ENCODE measurements at regions of chr7 and their contacts with region 1.

Region 1: DNA sequence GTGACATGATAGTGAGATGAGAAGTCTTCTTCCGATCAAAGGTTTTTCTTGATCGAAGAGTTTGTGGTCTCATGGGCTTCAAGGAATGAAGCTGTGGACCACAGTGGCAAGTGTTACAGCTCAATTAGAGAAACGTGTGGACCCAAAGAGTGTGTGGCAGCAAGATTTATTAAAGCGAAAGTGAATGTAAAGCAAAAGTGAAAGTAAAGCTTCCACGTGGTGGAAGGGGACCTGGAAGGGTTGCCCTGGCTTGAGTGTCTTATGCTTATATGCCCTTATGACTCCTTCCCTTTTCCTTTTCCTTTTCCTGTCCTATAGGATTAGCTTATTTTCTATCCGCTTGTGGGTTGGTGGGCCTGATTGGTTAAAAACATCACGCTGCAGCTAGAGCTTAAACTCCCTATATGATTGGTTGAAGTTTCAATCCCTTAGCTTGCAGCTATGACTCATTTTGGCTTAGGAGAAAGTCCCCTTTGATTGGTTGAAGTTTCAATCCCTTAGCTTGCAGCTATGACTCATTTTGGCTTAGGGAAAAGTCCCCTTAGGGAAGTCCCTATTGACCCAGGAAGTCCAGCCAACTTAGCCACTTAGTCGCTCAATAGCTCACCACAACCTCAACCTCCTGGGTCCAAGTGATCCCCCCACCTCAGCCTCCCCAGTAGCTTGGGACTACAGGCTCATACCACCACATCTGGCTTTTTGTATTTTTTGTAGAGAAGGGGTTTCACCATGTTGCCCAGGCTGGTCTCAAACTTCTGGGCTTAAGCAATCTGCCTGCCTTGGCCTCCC is 34.7 kb downstream of the MRPS24 start:
- DNase-seq: peak; percentile 24
- H3K4me3 Mint-ChIP-seq: peak overlapping the region; percentile 73
- H3K27ac Mint-ChIP-seq: peak overlapping the region; percentile 78
- H3K4me1 Mint-ChIP-seq: peaks cover 16% of the 10 kb centered on the region
- H3K27me3 Mint-ChIP-seq: peaks cover 2% of the 10 kb centered on the region

Region 2: GRCh38 chr7:41940760-41941343 is 1893.8 kb before region 1 on chr7:
- intact Hi-C with region 1: loop called (anchors 5 kb)
- DNase-seq: peak; percentile 35
- H3K4me3 Mint-ChIP-seq: no peak overlapping the region
- H3K27ac Mint-ChIP-seq: no peak overlapping the region
- H3K4me1 Mint-ChIP-seq: peaks cover 26% of the 10 kb centered on the region
- H3K27me3 Mint-ChIP-seq: peaks cover 22% of the 10 kb centered on the region

Region 3: DNA sequence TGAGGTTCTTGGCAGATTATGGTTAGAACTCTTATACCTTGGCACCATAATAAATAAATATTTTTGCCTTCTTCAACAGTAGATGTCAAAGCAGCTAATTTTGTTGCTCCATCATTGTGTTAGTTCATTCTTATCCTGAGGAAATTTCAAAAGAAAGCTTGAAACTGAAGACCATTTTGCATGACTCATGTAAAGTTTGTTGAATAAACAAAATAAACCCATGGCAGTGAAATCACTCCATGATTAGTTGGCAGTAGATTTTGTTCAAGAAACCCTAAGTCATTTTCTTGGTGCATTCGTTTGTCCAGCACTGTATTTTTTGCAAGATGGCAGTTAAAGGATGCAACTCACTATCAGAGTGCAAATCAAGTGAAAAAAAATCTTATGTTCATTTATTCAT is 630.6 kb before region 1 on chr7:
- intact Hi-C with region 1: no loop called
- DNase-seq: no peak
- H3K4me3 Mint-ChIP-seq: no peak overlapping the region
- H3K27ac Mint-ChIP-seq: no peak overlapping the region
- H3K4me1 Mint-ChIP-seq: no peaks in the 10 kb centered on the region
- H3K27me3 Mint-ChIP-seq: no peaks in the 10 kb centered on the region

Region 4: DNA sequence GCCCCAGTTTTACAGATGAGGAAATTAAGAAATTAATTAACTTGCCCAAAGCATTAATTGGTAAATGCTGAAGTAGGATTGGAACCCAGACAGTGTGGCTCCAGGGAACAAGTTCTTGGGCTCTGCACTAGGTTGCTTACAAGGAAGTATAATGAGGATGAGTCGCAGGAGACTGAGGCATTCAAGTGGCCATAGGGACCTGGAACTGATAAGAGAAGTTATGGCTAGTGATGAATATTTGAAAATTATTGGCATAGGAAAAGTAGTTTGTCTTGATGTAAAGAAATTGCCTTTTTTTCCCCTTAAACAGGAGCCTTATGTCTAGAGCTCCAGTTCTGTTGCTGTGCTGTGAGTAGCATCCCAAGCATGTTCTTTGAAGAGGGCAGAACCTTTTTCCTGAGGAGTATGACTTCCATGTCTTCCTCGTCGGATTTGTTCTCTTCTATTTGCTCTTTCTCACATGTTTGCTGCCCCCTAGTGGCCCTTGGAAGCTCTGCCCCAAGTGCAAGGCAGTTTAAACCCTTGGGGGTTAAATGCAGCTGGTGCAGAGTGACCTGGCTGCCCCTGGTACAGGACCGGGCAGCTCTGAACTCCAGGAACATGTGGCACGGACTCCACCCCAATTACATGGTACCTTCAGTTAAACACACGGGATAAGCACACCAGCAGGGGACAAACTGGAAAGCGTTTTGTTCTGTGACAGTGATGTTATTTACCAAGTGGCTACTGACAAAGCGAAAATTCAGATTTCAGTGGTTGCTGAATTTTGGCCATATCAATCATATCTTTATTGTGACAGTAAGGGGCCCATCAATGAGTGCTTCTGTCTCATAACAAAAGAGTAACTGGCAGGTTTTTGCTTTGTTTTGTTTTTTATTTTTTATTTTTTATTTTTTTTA is 573.4 kb before region 1 on chr7:
- intact Hi-C with region 1: loop called (anchors 2 kb)
- DNase-seq: peak; percentile 52
- H3K4me3 Mint-ChIP-seq: no peak overlapping the region
- H3K27ac Mint-ChIP-seq: no peak overlapping the region
- H3K4me1 Mint-ChIP-seq: no peaks in the 10 kb centered on the region
- H3K27me3 Mint-ChIP-seq: peaks cover 10% of the 10 kb centered on the region

Region 5: GRCh38 chr7:43353902-43354301 is 480.8 kb before region 1 on chr7:
- intact Hi-C with region 1: no loop called
- DNase-seq: no peak
- H3K4me3 Mint-ChIP-seq: no peak overlapping the region
- H3K27ac Mint-ChIP-seq: no peak overlapping the region
- H3K4me1 Mint-ChIP-seq: no peaks in the 10 kb centered on the region
- H3K27me3 Mint-ChIP-seq: peaks cover 4% of the 10 kb centered on the region

Region 6: GRCh38 chr7:43454936-43455518 is 379.6 kb before region 1 on chr7:
- intact Hi-C with region 1: loop called (anchors 5 kb)
- DNase-seq: no peak
- H3K4me3 Mint-ChIP-seq: no peak overlapping the region
- H3K27ac Mint-ChIP-seq: no peak overlapping the region
- H3K4me1 Mint-ChIP-seq: peaks cover 5% of the 10 kb centered on the region
- H3K27me3 Mint-ChIP-seq: peaks cover 18% of the 10 kb centered on the region

Region 7: DNA sequence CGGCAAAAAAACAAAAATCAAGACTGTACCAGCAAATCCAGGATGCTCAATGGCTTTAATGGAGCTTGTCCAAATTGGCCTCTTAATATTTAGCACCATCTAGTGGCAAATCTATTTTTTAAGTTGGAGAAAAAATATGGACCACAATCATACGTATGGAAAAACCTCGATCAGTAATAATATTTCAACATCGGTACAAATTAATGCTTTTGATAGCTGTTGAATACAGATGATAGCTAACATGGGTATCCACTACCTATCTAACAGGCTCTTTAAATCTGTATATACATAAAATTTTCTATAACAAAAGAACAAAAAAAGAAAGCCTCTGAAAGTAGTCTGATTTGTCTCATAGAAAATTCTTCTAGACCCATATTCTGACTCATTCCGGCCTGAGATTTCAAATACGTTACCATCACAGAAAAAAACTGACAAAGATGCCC is 134.6 kb before region 1 on chr7:
- intact Hi-C with region 1: loop called (anchors 1 kb)
- DNase-seq: no peak
- H3K4me3 Mint-ChIP-seq: no peak overlapping the region
- H3K27ac Mint-ChIP-seq: no peak overlapping the region
- H3K4me1 Mint-ChIP-seq: peaks cover 65% of the 10 kb centered on the region
- H3K27me3 Mint-ChIP-seq: no peaks in the 10 kb centered on the region

Region 8: GRCh38 chr7:43758029-43758821 is 76.4 kb before region 1 on chr7 and contains the start of gene BLVRA:
- intact Hi-C with region 1: loop called (anchors 1 kb)
- DNase-seq: peak; percentile 76
- H3K4me3 Mint-ChIP-seq: peak within 1 kb of the TSS; percentile 88
- H3K27ac Mint-ChIP-seq: peak within 1 kb of the TSS; percentile 49
- H3K4me1 Mint-ChIP-seq: peaks cover 34% of the 10 kb centered on the region
- H3K27me3 Mint-ChIP-seq: peaks cover 3% of the 10 kb centered on the region
- total RNA-seq, gene BLVRA: 48.1 and 52.9 TPM in 2 replicates

Region 9: GRCh38 chr7:43850348-43851116 is 15.9 kb after region 1 on chr7:
- intact Hi-C with region 1: no loop called
- DNase-seq: no peak
- H3K4me3 Mint-ChIP-seq: no peak overlapping the region
- H3K27ac Mint-ChIP-seq: no peak overlapping the region
- H3K4me1 Mint-ChIP-seq: no peaks in the 10 kb centered on the region
- H3K27me3 Mint-ChIP-seq: no peaks in the 10 kb centered on the region